ENCODE measurements at regions of chr7 and their contacts with region 1.

Region 1: DNA sequence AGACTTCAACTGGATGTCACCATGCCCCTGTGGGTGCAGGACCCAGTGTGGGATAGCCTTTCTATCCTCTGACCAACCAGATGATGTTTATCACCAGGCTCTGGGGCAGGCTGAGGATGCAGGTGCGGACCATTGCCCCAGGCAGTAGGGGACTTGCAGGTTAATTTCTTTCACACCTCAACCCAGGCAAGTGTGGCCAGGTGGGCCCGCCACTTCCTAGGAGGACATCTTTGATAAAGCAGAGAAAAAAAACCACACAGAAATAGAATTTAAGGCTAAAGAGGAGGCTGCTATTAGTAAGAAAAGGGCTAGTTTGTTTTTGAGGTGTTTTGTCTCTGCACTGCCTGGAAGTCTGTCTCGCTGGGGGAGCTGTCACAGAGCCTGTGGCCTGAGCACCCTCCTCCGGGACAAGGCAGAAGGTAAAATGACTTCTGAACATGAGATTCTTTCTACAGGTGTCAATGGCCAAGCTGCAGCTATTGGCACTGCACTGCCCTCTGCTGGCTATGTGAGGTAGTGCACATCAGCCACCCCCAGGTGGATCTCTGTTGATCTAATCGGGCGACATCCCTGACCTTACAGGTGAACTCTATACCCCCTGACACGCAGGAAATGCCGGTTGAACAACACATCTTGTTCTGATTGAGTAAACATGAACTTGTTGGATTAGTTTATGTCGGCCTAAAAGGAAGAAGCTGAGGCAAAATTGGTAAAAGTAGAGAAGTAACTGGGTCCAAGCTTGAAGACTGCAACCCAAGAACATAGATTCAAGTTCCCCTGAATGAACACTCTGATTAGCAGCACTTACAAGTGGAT is 21.0 kb downstream of the UPP1 start:
- DNase-seq: peak; percentile 76 to 88
- ATAC-seq: peak; percentile 92

Region 2: GRCh38 chr7:47945261-47946001 is 164.6 kb before region 1 on chr7:
- intact Hi-C with region 1: loop called in 1 of 2 experiments (anchors 2 kb)
- DNase-seq: peak; percentile 58 to 96
- ATAC-seq: no peak

Region 3: DNA sequence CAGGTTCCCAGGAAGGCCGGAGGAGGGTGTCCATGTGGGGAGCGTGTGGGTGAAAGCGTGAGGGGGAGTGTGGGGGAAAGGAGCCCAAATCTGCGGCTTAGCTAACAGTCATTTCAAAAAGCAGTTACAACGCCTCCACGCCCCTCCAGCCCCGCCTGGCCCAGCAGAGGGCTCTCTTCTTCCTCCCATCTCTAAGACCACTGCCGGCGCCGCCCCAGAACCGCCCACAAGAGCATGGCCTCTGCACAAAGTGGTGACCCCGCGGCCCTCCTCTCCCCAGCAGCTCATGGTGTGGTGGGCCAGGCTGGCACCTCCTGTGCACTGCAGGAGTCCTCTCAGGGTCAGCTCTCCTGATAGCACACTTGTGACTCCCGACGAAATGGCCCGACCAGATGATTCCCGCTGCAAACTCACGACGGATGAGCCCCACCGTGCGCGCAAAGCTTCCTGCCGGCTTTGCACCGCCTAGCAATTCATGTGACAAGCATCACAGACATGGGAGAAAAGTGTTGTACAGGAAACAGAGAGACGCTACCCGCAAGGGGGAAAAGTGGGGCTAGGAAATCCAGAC is 118.2 kb before region 1 on chr7:
- intact Hi-C with region 1: loop called in 1 of 2 experiments (anchors 2 kb)
- DNase-seq: peak; percentile 90 to 93
- ATAC-seq: peak; percentile 98

Region 4: DNA sequence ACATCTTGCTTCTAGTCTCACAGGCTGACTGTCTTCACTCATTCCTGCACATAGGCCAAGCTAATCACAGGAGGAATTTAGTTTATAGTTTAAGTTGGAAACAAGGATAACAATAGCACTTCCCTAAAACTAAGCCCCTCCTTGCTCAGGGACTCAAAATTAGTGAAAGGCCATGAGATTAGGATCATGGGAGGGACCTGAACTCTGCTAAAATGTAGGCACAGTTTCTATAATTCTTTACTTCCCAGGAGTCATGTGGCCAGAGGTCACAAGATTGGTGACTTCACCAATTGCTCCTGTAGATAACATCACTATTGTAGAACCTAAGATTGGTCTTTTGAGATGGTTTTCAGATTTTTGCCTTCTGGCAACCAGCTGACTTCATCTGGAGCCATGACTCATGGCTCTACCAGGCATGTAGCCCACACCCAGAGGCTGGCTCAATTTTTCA is 35.8 kb before region 1 on chr7:
- intact Hi-C with region 1: no loop called
- DNase-seq: no peak
- ATAC-seq: no peak

Measured in left colon (tissue), 2 donors.